Activated T-helper 1 cell treated with anti-CD3 and anti-CD28 coated beads, Interleukin-12 subunit alpha, Interleukin-12 subunit beta, Interleukin-2, Interleukin-4 antibody, amounts not matched to agents 30 ng/mL and 10 ng/mL and 1 ng/mL, durations not matched to agents 14 hours and 24 hours and 36 hours (primary cell): ENCODE measurements at regions of chr3 and their contacts with region 1.

Region 1: DNA sequence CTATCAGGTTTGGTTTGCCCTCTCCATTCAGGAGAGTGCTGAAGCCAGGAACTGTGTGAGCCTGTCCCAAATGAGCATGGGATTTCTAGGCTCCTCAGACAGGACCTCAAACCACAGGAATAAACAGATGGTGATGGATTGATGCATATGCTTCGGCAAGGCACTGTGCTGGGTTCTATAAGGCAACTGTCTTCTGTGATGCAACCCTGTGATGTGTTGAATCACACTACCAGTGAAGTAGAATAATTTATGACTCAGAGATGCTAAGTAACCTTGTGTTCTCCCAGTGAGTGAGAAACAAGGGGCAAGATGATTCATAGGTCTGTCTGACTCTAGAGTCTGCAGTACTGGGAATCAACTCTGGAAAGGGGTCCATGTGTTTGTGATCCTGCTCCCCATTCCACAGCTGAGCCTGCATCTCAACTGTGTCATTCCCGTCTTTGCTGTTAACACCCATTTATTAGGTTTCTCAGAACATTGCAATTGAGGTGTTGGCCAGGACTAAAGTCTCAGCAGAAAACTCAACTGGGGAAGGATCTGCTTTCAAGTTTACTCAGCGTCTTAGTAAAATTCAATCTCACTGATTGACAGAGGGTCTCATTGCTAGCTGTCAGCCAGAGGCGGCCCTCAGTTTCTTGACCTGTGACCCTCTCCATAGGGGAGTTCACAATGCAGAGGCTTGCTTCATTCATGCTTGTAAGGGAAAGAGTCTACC is 510.1 kb upstream of the CFAP20DC start:
- DNase-seq: no peak
- H3K4me3 Mint-ChIP-seq: no peak overlapping the region
- H3K27ac Mint-ChIP-seq: peak overlapping the region; percentile 88
- H3K4me1 Mint-ChIP-seq: peaks cover 24% of the 10 kb centered on the region
- H3K27me3 Mint-ChIP-seq: no peaks in the 10 kb centered on the region

Region 2: DNA sequence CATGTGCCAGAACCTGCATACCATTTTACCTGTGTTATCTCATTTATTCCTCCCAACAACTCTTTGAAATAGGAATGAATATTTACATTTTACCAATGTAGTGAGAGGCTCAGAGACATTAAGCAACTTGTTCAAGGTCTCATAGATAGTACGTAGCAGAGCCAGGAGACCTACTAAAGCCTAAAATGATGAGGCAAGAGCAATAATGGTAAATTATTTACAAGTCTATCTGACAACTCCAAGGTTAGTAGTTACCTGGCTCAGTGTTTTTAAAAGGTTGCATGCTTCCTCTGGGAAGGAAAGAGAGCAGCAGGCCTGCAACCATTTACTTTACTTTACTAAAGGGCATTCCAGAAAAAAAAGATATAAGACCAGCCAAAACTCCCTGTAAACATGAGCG is 613.0 kb before region 1 on chr3:
- intact Hi-C with region 1: no loop called
- DNase-seq: no peak
- H3K4me3 Mint-ChIP-seq: no peak overlapping the region
- H3K27ac Mint-ChIP-seq: no peak overlapping the region
- H3K4me1 Mint-ChIP-seq: no peaks in the 10 kb centered on the region
- H3K27me3 Mint-ChIP-seq: no peaks in the 10 kb centered on the region

Region 3: GRCh38 chr3:59286791-59287531 is 272.9 kb before region 1 on chr3:
- intact Hi-C with region 1: loop called (anchors 1 kb)
- DNase-seq: peak; percentile 29
- H3K4me3 Mint-ChIP-seq: peak overlapping the region; percentile 1
- H3K27ac Mint-ChIP-seq: peak overlapping the region; percentile 91
- H3K4me1 Mint-ChIP-seq: peaks cover 37% of the 10 kb centered on the region
- H3K27me3 Mint-ChIP-seq: no peaks in the 10 kb centered on the region

Region 4: DNA sequence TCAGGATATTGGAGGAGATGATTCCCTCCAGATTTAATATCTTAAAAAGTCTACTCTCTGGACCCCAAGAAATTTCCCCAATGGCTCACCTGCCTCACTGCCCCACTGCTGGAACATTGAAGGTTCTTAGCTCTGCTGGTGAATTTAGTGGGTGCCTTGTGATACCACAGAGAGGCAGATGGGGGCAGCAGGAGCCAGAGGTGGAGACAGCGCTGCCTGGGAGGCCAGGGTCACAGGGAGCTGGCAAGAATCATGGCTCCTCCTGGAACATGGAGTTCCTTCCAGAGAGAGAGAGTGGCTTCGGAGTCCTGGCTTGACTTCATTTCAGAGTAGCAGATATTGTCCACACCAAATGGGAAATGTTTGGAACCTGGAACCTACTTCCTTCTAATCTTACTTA is 246.5 kb before region 1 on chr3:
- intact Hi-C with region 1: loop called (anchors 5 kb)
- DNase-seq: peak; percentile 22
- H3K4me3 Mint-ChIP-seq: no peak overlapping the region
- H3K27ac Mint-ChIP-seq: peak overlapping the region; percentile 49
- H3K4me1 Mint-ChIP-seq: peaks cover 47% of the 10 kb centered on the region
- H3K27me3 Mint-ChIP-seq: peaks cover 2% of the 10 kb centered on the region

Region 5: DNA sequence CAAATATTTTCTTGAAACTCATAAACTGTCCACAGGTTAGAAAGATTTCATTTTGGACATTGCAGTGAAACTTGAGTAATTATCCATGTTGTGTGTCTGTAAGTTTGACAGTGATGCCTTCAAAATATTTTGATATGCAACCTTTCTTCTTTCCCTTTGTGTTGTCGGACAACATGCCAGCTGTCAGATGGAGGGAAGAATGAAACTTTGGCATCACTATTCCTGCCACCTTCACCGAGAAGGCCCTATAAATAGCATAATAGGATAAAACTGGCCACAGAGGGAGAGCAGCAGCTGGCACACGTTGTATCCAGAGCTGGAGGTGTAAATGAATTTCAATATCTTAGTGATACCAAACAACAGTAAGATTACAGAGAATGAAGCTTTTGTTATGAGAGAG is 73.4 kb before region 1 on chr3:
- intact Hi-C with region 1: no loop called
- DNase-seq: no peak
- H3K4me3 Mint-ChIP-seq: no peak overlapping the region
- H3K27ac Mint-ChIP-seq: no peak overlapping the region
- H3K4me1 Mint-ChIP-seq: peaks cover 41% of the 10 kb centered on the region
- H3K27me3 Mint-ChIP-seq: no peaks in the 10 kb centered on the region

Region 6: GRCh38 chr3:59526999-59527398 is 32.9 kb before region 1 on chr3:
- intact Hi-C with region 1: loop called (anchors 1 kb)
- DNase-seq: no peak
- H3K4me3 Mint-ChIP-seq: no peak overlapping the region
- H3K27ac Mint-ChIP-seq: peak overlapping the region; percentile 19
- H3K4me1 Mint-ChIP-seq: peaks cover 9% of the 10 kb centered on the region
- H3K27me3 Mint-ChIP-seq: no peaks in the 10 kb centered on the region

Region 7: DNA sequence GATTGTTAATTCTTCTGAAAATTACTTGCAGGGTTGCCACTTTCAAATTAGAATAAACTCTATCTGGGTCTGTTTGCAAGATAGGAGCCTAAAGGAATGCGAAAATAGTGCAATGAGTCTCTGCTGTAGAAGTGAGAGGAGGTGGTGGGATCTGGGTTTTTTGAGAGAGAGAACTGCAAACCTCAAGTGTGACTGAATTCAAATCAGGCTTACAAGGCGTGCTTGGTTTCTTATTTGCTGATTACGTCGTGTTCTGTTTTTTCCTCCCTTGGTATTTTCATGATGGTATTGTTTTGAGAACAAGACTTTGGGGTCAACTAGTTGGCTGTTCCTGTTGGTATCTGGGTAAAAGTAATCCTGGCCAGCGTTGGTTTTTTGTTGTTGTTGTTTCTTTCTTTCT is 19.2 kb before region 1 on chr3:
- intact Hi-C with region 1: loop called (anchors 1 kb)
- DNase-seq: no peak
- H3K4me3 Mint-ChIP-seq: no peak overlapping the region
- H3K27ac Mint-ChIP-seq: peak overlapping the region; percentile 38
- H3K4me1 Mint-ChIP-seq: peaks cover 23% of the 10 kb centered on the region
- H3K27me3 Mint-ChIP-seq: peaks cover 2% of the 10 kb centered on the region

Region 8: GRCh38 chr3:59575113-59576001 is 15.5 kb after region 1 on chr3:
- intact Hi-C with region 1: no loop called
- DNase-seq: peak; percentile 72
- H3K4me3 Mint-ChIP-seq: no peak overlapping the region
- H3K27ac Mint-ChIP-seq: peak overlapping the region; percentile 15
- H3K4me1 Mint-ChIP-seq: peaks cover 10% of the 10 kb centered on the region
- H3K27me3 Mint-ChIP-seq: no peaks in the 10 kb centered on the region

Region 9: GRCh38 chr3:60555684-60556354 is 995.9 kb after region 1 on chr3:
- intact Hi-C with region 1: loop called (anchors 10 kb)
- DNase-seq: no peak
- H3K4me3 Mint-ChIP-seq: no peak overlapping the region
- H3K27ac Mint-ChIP-seq: peak overlapping the region; percentile 0
- H3K4me1 Mint-ChIP-seq: peaks cover 38% of the 10 kb centered on the region
- H3K27me3 Mint-ChIP-seq: peaks cover 2% of the 10 kb centered on the region